Dendritic cell treated with granulocyte-macrophage colony-stimulating factor and Interleukin-4, amounts not matched to agents 40 ng/mL and 50 ng/mL, for 4 days (primary cell): ENCODE measurements at regions of chr11 and their contacts with region 1.

Region 1: DNA sequence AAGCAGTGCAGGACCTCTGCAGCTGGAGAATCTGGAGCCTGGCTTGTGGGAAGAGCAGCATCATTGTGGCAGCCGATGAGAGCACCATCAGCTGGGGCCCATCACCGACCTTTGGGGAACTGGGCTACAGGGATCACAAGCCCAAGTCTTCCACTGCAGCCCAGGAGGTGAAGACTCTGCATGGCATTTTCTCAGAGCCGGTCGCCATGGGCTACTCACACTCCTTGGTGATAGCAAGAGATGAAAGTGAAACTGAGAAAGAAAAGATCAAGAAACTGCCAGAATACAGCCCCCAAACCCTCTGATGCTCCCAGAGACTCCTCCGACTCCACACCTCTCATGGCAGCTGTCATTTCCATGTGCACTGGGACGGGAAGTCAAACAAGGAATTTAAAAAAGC is 35.6 kb downstream of the ASRGL1 start:
- H3K4me3 Mint-ChIP-seq: no peak overlapping the region
- H3K27ac Mint-ChIP-seq: no peak overlapping the region
- H3K4me1 Mint-ChIP-seq: no peaks in the 10 kb centered on the region
- H3K27me3 Mint-ChIP-seq: no peaks in the 10 kb centered on the region

Region 2: GRCh38 chr11:61927501-61927900 is 445.4 kb before region 1 on chr11:
- intact Hi-C with region 1: no loop called
- H3K4me3 Mint-ChIP-seq: no peak overlapping the region
- H3K27ac Mint-ChIP-seq: no peak overlapping the region
- H3K4me1 Mint-ChIP-seq: peaks cover 36% of the 10 kb centered on the region
- H3K27me3 Mint-ChIP-seq: peaks cover 24% of the 10 kb centered on the region

Region 3: DNA sequence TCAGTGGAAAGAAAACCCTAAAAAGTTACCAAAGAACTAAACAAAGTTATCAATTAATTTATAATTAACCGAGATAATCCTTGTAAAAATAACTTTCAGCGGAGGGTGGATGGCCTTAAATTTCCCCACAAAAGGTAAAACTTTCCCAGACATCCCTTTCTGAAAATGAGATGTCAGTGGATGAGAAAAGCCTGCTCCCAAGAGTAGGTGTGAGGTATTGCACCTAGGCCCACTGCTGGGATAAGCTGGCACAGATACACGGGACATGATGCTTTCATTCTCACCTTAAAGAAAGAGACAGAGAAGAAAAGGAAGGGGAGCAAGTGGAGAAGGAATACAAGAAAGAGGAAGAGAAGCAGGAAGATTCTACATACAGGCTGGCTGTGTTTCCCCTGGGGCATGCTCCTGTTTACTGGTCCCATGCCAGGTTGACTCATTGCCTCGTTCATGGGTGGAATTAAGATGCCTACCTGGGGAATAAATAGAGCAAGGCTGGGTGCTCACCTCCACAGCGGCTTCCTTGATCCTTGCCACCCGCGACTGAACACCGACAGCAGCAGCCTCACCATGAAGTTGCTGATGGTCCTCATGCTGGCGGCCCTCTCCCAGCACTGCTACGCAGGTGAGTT is 103.1 kb before region 1 on chr11 and contains the start of gene SCGB2A2:
- intact Hi-C with region 1: no loop called
- H3K4me3 Mint-ChIP-seq: no peak within 1 kb of the TSS
- H3K27ac Mint-ChIP-seq: no peak within 1 kb of the TSS
- H3K4me1 Mint-ChIP-seq: no peaks in the 10 kb centered on the region
- H3K27me3 Mint-ChIP-seq: peaks cover 16% of the 10 kb centered on the region

Region 4: DNA sequence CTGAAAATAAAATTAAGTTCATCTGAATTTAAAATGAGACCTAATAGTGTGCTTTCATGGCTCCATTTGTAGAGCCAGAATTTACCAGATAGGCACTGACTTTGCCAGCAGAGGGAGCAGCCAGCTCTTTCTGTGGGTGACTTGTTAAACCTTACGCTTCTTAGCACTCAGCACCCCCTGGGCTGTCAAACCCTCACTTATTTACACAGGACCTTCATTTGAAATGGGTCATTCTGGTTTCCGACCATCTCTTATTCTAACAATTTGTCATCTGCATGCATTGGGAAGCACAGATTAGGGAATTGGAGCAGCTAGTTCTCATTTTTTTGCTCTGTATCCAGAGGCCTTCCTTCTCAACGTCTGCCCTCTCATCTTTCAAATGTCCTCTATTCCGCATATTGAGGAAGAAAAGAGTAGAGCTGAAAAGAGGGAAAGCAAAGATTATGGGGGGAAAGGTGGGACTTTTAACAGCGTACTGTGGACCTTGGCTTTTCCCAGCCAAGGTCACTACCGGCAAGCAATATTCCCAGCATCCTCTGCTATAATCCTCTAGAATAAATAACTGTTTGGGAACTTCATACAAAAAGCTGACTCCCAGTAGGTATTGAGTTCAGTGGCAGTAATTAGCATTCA is 32.5 kb before region 1 on chr11:
- intact Hi-C with region 1: loop called (anchors 1 kb)
- H3K4me3 Mint-ChIP-seq: peak overlapping the region; percentile 62
- H3K27ac Mint-ChIP-seq: peak overlapping the region; percentile 66
- H3K4me1 Mint-ChIP-seq: peaks cover 73% of the 10 kb centered on the region
- H3K27me3 Mint-ChIP-seq: peaks cover 3% of the 10 kb centered on the region